H1 (cell line): ENCODE measurements at regions of chr9 and their contacts with region 1.

Region 1: DNA sequence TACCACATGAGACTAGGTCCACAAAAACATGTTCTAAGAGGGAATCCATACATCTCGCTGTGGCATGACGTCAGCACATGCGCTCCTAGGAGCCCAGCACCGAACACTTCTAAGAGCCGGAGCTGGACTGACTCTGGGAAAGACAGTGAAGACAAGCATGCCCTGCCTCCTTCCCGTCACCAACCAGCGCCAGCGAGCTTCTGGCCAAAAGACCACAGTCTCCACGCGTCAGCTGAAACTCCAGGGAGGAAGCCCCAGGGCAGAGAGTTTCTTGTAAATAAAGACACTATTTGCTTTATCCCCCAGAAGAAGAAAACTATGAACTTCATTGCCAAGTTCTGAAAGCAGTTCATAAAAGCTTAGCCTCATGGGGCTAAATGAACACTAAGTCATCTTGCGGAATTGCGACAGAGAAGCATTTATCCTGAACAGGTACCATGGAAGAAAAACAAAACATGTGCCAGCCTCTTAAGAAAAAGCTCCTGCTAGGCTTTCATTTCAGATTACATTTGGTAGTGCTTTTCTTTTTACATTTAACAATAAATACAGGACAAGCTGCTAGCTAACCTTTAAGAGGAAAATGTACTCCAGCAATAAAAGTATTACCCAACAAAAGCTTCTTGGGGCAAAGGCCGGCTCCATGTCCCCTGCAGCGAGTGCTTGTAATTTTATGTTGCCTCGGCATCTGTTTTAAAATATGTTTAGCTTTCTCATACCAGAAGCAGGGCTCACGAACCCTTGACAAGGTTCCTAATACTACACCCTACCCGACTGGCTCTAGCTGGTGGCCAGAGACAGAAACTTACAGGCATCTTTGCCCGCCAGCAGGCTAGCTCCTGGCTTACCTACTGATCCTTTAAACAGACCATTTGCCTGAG is 96.5 kb downstream of the PRRT1B start:
- DNase-seq: no peak
- H3K4me3 ChIP-seq: no peak overlapping the region
- H3K27ac ChIP-seq: no peak overlapping the region
- H3K4me1 ChIP-seq: peaks cover 0 to 7% (median 5%) of the 10 kb centered on the region in 4 experiments; a peak in 6 of 7 replicates
- H3K27me3 ChIP-seq: no peaks in the 10 kb centered on the region
- CTCF ChIP-seq: peak; percentile 22 to 41 (median 36)
- EP300 ChIP-seq: no peak
- POLR2A ChIP-seq: no peak
- RAD21 ChIP-seq: peak; percentile 45 to 60

Region 2: DNA sequence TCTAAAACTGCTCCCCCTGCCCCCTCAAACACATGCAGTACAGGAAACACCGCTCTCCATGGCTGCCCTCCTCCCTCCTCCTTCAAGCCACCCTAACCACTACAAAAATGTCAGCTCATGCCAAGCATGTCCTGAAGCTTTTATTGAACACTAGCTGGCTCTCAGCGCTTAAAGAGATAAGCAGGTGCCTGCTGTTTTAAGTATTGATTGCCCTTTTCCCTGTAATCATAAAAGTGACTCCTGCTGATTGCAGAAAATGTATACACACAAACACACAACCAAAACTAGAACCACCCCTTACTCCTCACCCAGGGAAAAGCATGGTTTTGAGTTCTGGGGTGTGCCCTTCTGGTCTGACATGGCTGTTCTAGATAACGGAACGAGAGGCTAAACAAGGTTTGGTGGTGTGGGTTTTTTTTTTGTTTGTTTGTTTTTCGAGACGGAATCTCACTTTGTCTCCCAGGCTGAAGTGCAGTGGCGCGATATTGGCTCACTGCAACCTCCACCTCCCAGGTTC is 107.1 kb before region 1 on chr9:
- CTCF ChIA-PET with region 1: no interaction called
- POLR2A ChIA-PET with region 1: no interaction called
- DNase-seq: no peak
- H3K4me3 ChIP-seq: no peak overlapping the region
- H3K27ac ChIP-seq: no peak overlapping the region
- H3K4me1 ChIP-seq: peaks cover 0 to 8% (median 4%) of the 10 kb centered on the region in 4 experiments; a peak in 6 of 7 replicates
- H3K27me3 ChIP-seq: no peaks in the 10 kb centered on the region
- CTCF ChIP-seq: no peak
- EP300 ChIP-seq: no peak
- POLR2A ChIP-seq: no peak
- RAD21 ChIP-seq: no peak

Region 3: DNA sequence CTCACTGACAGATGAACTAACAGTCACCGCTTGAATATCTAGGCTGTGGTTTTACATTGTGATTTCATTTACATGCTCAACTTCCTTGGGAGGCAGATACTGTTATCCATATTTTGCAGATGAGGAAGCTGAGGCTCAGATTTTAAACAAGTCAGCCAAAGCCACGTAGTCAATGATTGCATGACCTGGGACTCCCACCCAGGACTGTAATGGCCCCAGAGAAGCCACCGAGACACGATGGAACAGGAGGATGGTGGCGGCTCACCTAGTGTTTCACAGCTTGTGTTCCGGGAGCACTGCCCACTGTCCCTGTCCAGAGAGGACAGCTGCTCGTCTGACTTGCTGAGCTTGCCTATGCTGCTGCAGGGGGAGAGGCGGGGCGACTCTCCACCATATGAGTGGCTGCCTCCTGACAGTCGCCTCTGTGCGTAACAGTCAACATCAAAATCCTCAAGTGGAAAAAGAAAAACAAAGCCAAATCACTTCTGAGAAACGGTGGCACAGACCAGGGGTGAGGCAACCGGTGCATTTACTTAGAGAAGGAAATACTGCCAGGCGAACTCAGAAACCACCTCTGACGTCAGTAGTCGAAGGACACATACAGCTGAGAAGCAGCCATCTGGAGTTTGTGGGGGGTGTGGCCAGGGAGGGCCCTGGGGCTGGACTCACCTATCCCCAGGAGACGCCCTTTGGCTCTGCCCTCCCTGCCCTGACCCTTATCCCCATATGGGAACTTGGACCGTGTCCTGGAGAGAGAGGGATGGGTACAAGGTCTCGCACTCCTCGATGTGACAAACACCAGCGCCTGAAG is 14.0 kb before region 1 on chr9:
- CTCF ChIA-PET with region 1: interaction called, 33 read pairs
- POLR2A ChIA-PET with region 1: interaction called, 3 read pairs
- DNase-seq: no peak
- H3K4me3 ChIP-seq: no peak overlapping the region
- H3K27ac ChIP-seq: no peak overlapping the region
- H3K4me1 ChIP-seq: peaks cover 0 to 10% (median 3%) of the 10 kb centered on the region in 4 experiments; a peak in 4 of 7 replicates
- H3K27me3 ChIP-seq: no peaks in the 10 kb centered on the region
- CTCF ChIP-seq: no peak
- EP300 ChIP-seq: no peak
- POLR2A ChIP-seq: no peak
- RAD21 ChIP-seq: no peak

Region 4: DNA sequence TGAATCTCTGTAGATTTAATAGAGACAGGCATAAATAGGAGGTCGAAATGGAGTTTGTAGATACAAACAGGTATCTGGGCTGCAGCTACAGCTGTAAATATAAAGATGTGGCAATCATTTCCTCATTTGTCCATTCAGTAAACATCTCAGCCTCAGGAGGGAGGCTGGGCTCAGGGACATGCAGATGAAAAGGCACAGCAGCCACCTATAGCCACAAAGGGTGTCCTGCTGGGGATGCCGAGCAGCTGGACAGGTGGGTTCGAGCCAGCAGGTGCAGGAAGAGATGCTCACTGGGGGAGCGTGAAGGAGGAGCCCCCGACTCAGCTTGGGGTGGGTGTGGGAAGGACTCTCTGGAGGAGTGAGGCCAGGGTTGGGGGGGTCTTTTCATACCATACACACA is 146.5 kb after region 1 on chr9:
- CTCF ChIA-PET with region 1: no interaction called
- POLR2A ChIA-PET with region 1: no interaction called
- DNase-seq: no peak
- H3K4me3 ChIP-seq: no peak overlapping the region
- H3K27ac ChIP-seq: no peak overlapping the region
- H3K4me1 ChIP-seq: peaks cover 0 to 7% (median 1%) of the 10 kb centered on the region in 4 experiments; a peak in 4 of 7 replicates
- H3K27me3 ChIP-seq: no peaks in the 10 kb centered on the region
- CTCF ChIP-seq: no peak
- EP300 ChIP-seq: no peak
- POLR2A ChIP-seq: no peak
- RAD21 ChIP-seq: no peak